ENCODE measurements at regions of chr15 and their contacts with region 1.

Region 1: GRCh38 chr15:49855917-49856637 is 235.2 kb downstream of the DTWD1 start:
- DNase-seq: peak; percentile 93
- H3K4me3 ChIP-seq: no peak overlapping the region
- H3K27ac ChIP-seq: no peak overlapping the region
- H3K27me3 ChIP-seq: no peaks in the 10 kb centered on the region
- CTCF ChIP-seq: no peak

Region 2: DNA sequence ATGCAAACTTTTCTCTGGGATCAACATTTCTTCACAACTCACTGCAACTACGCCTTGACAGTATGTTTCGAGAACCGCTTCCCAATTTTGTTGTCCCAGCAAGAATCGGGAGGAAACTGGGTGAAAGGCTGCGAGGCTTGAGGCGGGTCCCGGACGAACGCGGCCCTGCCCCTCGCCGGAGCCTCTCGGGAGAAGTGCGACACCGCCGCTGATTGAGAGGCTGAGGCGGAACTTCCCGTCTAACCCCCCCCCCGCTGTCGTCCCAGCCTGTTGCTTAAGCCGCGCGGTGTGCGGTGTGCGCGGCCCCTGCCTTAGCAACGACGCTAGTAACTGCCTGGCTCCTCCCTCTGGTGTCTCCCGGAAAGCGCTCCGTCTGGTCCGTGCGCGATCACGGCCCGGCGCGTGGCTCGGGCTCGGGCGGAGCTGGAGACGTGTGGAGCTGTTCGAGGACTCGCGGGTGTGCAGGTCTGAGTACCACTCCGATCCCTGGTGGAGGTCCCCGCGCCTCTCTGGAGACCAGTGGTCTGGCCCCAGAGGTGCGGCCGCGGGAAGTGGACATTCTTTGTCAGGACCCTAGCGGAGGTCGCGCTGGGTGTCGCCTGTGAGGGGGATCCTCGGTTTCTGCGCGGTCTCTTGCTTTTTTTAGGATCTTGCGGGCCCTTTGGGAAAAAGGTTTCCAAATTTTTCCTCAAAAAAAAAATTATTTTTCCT is 235.3 kb before region 1 on chr15 and contains the starts of genes DTWD1 and FAM227B:
- CTCF ChIA-PET with region 1: no interaction called
- POLR2A ChIA-PET with region 1: interaction called, 16 read pairs
- DNase-seq: peak; percentile 96
- H3K4me3 ChIP-seq: peak within 1 kb of the TSS; percentile 80
- H3K27ac ChIP-seq: peak within 1 kb of the TSS; percentile 93
- H3K27me3 ChIP-seq: no peaks in the 10 kb centered on the region
- CTCF ChIP-seq: no peak
- polyA plus RNA-seq, gene DTWD1: 44.0 and 65.4 TPM in 2 replicates
- polyA plus RNA-seq, gene FAM227B: 5.1 and 6.1 TPM in 2 replicates

Region 3: DNA sequence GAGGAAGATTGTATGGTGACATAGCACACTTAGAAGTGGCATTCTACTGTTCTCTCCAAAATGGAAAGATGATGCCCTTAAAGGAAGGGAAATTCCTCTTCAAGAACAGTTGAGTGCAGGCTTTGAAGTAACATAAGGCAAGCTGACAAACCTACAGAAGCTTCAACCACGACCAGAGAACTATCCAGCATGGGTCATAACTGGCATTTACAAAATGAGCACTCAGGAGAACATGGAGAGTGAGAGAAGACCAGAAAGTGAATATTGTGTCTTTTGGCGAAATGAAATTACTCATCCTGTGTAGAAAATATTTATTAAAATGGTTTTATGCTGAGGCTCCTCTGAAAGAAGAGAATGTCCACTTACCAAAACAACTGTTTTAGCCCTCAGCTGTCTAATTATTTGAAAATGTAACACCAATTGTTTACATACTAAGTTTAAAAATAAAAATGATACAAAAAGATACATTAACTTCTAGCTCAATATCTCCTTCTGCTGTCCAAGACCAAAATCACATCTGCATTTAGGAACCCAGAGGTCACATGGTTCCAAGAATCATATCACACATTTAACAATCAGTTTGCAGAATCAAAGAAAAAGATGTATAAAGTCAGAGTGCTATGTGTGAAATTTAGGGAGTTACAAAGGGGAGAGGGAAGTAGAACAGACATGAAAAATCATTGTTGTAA is 46.1 kb after region 1 on chr15:
- CTCF ChIA-PET with region 1: no interaction called
- POLR2A ChIA-PET with region 1: interaction called, 22 read pairs
- DNase-seq: no peak
- H3K4me3 ChIP-seq: no peak overlapping the region
- H3K27ac ChIP-seq: peak overlapping the region; percentile 40
- H3K27me3 ChIP-seq: no peaks in the 10 kb centered on the region
- CTCF ChIP-seq: peak; percentile 62

Region 4: DNA sequence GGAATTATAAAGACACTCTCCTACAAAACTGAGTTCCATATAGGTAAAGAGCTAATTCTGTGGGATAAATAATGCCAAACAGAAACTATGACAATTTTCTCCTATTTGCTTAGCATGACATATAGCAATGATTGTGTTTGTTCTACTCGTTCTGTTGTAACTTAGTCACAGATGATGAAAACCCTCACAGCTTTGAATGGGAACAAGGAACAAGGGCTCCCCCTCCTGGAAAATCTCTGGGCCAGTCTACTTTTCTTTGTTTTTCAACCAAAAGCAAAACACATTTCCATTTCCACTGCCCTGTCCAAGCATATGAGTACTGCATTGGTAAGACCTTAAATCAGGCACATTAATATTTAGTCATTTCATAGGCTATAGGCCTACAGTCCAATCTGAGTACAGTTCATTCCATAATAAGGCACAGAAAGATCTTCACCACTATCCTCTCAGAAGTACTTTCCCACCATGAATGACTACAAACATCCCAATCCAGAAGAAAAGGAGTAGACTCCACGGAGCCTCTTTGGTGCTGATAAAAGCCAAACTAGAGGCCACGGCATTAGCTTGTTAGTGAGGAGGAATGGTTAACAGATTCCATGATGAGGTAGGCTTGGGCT is 195.8 kb after region 1 on chr15:
- CTCF ChIA-PET with region 1: interaction called, 3 read pairs
- POLR2A ChIA-PET with region 1: interaction called, 13 read pairs
- DNase-seq: peak; percentile 61
- H3K4me3 ChIP-seq: no peak overlapping the region
- H3K27ac ChIP-seq: no peak overlapping the region
- H3K27me3 ChIP-seq: no peaks in the 10 kb centered on the region
- CTCF ChIP-seq: peak; percentile 85